ENCODE measurements at regions of chr1 and their contacts with region 1.

Region 1: DNA sequence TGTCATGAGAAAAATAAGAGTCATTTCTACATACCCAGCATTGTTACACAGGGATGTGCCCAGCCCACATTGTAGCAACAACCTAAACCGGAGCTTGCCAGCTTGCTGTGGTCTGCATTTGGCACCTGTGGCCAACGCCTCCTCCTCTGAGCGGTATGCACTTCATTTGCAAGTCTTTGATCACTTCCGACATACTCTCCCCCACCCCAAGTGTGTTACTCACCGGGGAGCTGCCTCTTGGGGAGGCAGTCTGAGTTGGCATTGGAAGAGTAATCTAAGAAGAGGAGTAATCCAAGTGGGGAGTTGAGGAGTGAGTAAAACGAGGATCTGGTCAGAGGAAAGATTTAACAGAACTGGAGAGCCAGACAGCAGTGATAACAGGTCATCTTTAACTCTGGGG is 3.8 kb downstream of the BCL9 start:
- DNase-seq: peak; percentile 95
- H3K4me3 Mint-ChIP-seq: no peak overlapping the region
- H3K27ac Mint-ChIP-seq: peak overlapping the region; percentile 33
- H3K4me1 Mint-ChIP-seq: peaks cover 65% of the 10 kb centered on the region
- H3K27me3 Mint-ChIP-seq: no peaks in the 10 kb centered on the region

Region 2: DNA sequence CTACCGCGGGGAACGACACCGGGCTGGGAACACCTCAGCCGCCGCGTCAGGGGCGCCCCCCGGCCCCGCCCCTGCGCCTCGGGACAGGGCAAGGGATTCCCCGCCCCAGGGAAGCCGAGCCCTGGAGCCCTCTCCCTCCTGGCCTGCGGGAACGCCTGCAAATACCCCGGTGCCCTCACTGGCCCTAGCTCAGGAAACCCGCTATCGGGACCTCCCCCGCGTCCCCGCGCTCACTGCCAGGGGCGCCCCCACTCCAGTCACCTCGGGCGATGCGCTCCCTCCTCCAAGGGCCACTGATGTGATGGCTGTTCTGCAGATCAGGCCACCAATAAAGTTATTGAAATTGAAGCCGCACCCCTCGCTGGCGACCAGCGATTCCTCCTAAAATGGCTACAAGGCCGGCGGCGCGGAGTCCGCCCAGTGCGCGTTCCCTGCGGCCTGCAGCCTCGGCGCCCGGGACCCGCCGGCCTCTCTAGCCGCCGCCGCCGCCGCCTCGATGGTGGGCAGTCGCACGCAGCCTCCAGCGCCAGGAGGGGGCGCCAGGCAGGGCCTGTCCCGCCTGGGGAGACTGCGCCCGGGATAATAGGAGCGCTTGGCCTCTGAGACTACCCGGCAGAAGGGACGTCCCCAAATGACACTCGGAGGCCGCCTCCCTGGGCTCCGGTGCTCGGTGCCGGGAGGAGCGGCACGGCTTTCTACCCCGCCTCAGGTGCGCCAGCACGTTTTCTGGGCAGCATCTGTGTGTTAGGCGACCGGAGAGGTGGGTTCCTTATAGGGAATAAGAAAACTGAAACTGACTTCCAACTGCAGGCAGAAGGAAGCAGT is 372.8 kb before region 1 on chr1 and contains the start of gene PRKAB2:
- CTCF ChIA-PET with region 1: no interaction called
- intact Hi-C with region 1: loop called (anchors 1 kb)
- DNase-seq: peak; percentile 91
- H3K4me3 Mint-ChIP-seq: peak within 1 kb of the TSS; percentile 98
- H3K27ac Mint-ChIP-seq: peak within 1 kb of the TSS; percentile 96
- H3K4me1 Mint-ChIP-seq: peaks cover 32% of the 10 kb centered on the region
- H3K27me3 Mint-ChIP-seq: peaks cover 1% of the 10 kb centered on the region
- total RNA-seq, gene PRKAB2: 3.4 to 4.4 TPM

Region 3: DNA sequence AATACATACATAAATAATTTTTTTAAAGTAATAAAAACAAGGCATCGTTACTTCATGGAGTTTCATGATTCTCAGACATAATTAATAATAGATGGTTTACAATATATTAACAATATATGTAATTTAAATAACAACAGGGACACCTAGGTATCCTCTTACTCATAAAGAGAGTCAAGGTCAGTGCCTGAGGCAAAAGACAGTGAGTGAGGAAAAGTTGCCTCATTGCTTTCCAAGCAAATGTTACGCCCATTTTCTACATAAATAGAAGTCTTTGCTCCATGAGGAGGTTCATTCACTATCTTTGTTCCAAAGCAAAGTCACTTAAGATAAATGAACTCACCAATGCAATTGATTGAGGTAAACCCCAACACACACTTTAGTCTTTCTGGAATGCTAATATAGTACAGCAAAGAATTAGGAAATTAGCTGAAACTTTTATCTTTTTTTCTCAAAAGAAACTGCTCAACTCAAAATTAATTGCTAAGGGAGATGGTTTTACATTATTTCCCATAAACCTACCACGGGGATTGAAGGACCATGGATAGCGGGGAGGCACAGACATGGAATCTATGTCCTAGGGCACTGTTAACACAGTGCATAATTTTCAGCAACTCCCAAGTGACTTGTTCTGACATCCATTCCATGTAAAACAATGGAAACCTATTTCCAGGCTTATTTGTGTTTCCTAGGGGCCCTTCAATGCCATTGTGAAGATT is 15.8 kb after region 1 on chr1:
- CTCF ChIA-PET with region 1: interaction called, 9 read pairs
- intact Hi-C with region 1: loop called (anchors 1 kb)
- DNase-seq: no peak
- H3K4me3 Mint-ChIP-seq: no peak overlapping the region
- H3K27ac Mint-ChIP-seq: no peak overlapping the region
- H3K4me1 Mint-ChIP-seq: peaks cover 15% of the 10 kb centered on the region
- H3K27me3 Mint-ChIP-seq: no peaks in the 10 kb centered on the region

Region 4: DNA sequence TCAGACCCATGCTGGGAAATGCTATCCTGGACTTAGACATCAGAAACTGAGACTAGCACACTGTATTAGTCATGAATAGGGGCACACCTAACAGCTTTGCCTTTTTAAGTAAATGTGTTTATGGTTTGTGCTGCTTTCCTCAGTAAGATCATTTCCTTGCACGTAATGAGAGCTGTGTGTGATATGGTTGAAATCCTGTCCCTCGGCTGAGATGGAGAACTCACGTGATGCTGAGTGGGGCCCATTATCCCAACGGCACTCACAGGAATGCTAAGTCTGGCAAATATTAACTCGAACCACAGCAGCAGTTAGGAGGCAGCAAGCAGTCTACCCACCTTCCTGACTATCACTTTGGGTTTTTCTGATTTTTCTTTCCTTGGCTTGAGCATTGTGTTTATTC is 34.4 kb after region 1 on chr1:
- CTCF ChIA-PET with region 1: no interaction called
- intact Hi-C with region 1: loop called (anchors 1 kb)
- DNase-seq: peak; percentile 16
- H3K4me3 Mint-ChIP-seq: peak overlapping the region; percentile 56
- H3K27ac Mint-ChIP-seq: peak overlapping the region; percentile 69
- H3K4me1 Mint-ChIP-seq: peaks cover 34% of the 10 kb centered on the region
- H3K27me3 Mint-ChIP-seq: peaks cover 14% of the 10 kb centered on the region

Region 5: GRCh38 chr1:147618077-147618569 is 73.0 kb after region 1 on chr1:
- CTCF ChIA-PET with region 1: interaction called, 3 read pairs
- intact Hi-C with region 1: loop called (anchors 1 kb)
- DNase-seq: peak; percentile 61
- H3K4me3 Mint-ChIP-seq: no peak overlapping the region
- H3K27ac Mint-ChIP-seq: peak overlapping the region; percentile 78
- H3K4me1 Mint-ChIP-seq: peaks cover 19% of the 10 kb centered on the region
- H3K27me3 Mint-ChIP-seq: no peaks in the 10 kb centered on the region

Region 6: GRCh38 chr1:148388260-148389027 is 843.3 kb after region 1 on chr1:
- CTCF ChIA-PET with region 1: no interaction called
- intact Hi-C with region 1: loop called (anchors 10 kb)
- DNase-seq: peak; percentile 96
- H3K4me3 Mint-ChIP-seq: peak overlapping the region; percentile 89
- H3K27ac Mint-ChIP-seq: peak overlapping the region; percentile 99
- H3K4me1 Mint-ChIP-seq: peaks cover 37% of the 10 kb centered on the region
- H3K27me3 Mint-ChIP-seq: no peaks in the 10 kb centered on the region

Measured in activated naive CD4-positive, alpha-beta T cell treated with anti-CD3 and anti-CD28 coated beads for 36 hours (primary cell).